ENCODE measurements at regions of chr16 and their contacts with region 1.

Region 1: GRCh38 chr16:12819126-12820117 is 15.7 kb upstream of the CPPED1 start:
- DNase-seq: peak; percentile 47 to 81 (median 58)
- ATAC-seq: peak in 3 of 4 donors; percentile 59 to 69 (median 69)
- H3K4me3 ChIP-seq: no peak overlapping the region
- H3K27ac ChIP-seq: no peak overlapping the region
- H3K4me1 ChIP-seq: peaks cover 0 to 21% (median 0%) of the 10 kb centered on the region in 12 donors
- H3K27me3 ChIP-seq: peaks cover 0 to 5% (median 0%) of the 10 kb centered on the region in 9 donors
- CTCF ChIP-seq: peak; percentile 70 to 89 (median 80)
- POLR2A ChIP-seq: no peak

Region 2: DNA sequence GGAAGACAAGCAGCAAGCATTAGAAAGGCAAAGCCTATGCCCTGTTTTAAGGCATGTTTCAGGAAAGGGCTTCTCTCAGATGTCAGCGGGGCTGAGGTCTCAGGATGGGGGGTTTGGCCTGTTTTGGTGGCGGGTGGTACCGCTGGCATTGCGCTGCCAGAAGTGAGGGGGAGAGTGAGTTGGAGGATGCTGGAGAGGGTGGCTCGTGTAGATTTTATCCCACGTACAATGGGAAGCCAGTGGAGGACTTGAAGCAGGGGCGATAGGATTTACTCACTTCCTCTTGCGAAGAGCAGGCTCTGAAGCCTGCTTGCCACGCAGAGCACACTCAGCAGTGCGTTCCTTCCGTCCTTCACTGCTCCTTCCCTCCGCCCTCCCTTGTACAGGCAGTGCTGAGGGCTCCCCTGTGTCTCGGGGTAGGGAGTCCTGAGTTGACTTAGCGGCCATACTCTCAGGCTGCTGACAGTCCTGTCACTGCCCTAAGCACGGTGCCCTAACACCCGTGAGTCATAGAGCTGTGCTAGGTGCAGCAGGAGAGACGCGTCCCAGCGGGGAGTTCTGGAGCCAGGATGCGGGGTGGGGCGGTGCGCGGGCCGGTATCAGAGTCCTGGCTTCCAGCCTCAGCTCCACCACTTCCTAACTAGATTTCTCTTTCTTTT is 729.8 kb before region 1 on chr16:
- intact Hi-C with region 1: loop called in 6 of 10 experiments (anchors 5 to 10 kb)
- DNase-seq: peak in 2 of 5 donors; percentile 45 to 62
- ATAC-seq: peak; percentile 47 to 70 (median 69)
- H3K4me3 ChIP-seq: peak overlapping the region in 10 of 12 donors; percentile 8 to 51 (median 37)
- H3K27ac ChIP-seq: peak overlapping the region in 8 of 12 donors; percentile 12 to 59 (median 22)
- H3K4me1 ChIP-seq: peaks cover 0 to 49% (median 24%) of the 10 kb centered on the region in 12 donors
- H3K27me3 ChIP-seq: no peaks in the 10 kb centered on the region
- CTCF ChIP-seq: no peak
- POLR2A ChIP-seq: no peak

Region 3: GRCh38 chr16:12436201-12436657 is 383.2 kb before region 1 on chr16:
- intact Hi-C with region 1: no loop called
- DNase-seq: no peak
- ATAC-seq: no peak
- H3K4me3 ChIP-seq: no peak overlapping the region
- H3K27ac ChIP-seq: no peak overlapping the region
- H3K4me1 ChIP-seq: peaks cover 0 to 5% (median 0%) of the 10 kb centered on the region in 12 donors
- H3K27me3 ChIP-seq: no peaks in the 10 kb centered on the region
- CTCF ChIP-seq: no peak
- POLR2A ChIP-seq: no peak

Measured in heart left ventricle (tissue), 16 donors.